Activated CD4-positive, alpha-beta T cell treated with anti-CD3 and anti-CD28 coated beads, Interleukin-2, amount 10 ng/mL, durations not matched to agents 24 days and 14 days (primary cell): ENCODE measurements at regions of chr4 and their contacts with region 1.

Region 1: GRCh38 chr4:185039508-185040273 is 21.4 kb downstream of the HELT start:
- DNase-seq: peak; percentile 84
- H3K4me3 Mint-ChIP-seq: peak overlapping the region; percentile 59
- H3K27ac Mint-ChIP-seq: no peak overlapping the region
- H3K4me1 Mint-ChIP-seq: peaks cover 2% of the 10 kb centered on the region
- H3K27me3 Mint-ChIP-seq: peaks cover 22% of the 10 kb centered on the region

Region 2: DNA sequence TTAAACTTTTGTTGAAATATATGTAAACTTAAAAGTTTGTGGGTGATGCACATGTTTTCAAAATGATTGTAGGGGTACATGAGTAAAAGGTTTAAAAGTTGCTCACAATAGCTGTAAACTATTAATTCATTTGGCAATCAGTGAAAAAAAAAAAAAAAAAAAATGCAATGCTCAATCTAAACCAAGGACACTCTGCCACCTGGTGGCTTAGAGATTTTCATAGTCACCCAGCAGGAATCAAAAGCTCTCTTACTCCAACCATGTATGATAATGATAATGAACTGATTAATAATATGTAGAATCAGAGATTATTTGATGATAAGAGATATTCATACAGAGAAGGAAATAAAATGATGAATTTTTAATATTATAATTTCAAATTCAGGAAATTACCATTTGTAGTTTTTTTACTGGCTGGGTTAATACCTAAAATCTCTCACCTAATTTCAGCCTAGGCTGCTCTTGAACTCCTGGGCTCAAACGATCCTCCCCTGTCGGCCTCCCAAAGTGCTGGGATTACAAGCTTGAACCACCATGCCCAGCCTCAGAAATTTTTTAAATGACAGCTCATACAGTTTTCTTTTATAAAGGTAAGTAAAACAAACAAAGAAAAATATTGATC is 56.5 kb after region 1 on chr4:
- intact Hi-C with region 1: loop called (anchors 5 kb)
- DNase-seq: peak; percentile 71
- H3K4me3 Mint-ChIP-seq: no peak overlapping the region
- H3K27ac Mint-ChIP-seq: no peak overlapping the region
- H3K4me1 Mint-ChIP-seq: no peaks in the 10 kb centered on the region
- H3K27me3 Mint-ChIP-seq: peaks cover 27% of the 10 kb centered on the region

Region 3: DNA sequence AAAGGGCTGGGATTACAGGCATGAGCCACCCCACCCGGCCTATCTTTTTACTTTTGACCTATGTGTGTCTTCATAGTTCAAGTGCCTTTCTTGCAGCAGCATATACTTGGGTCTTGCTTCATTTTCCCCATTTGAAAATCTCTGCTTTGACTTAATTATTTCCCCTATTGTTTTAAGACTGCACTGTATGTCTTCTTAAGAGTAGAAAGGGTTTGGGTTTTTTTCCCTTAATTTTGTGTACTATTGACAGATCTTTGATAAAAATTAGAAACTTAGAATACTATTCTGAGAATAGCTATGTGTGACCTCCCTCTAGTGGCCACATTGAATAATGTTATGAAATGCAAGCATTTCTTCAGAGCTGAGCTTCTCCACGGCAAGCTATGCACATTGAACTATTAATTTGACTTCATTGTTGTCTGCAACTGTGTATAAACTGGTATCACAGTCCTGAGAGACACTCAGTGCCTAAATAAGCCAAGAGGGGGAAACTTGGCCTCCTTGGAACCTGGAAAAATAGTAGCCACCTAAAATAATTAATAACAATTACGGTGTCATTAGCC is 94.7 kb after region 1 on chr4:
- intact Hi-C with region 1: loop called (anchors 1 kb)
- DNase-seq: peak; percentile 68
- H3K4me3 Mint-ChIP-seq: no peak overlapping the region
- H3K27ac Mint-ChIP-seq: no peak overlapping the region
- H3K4me1 Mint-ChIP-seq: no peaks in the 10 kb centered on the region
- H3K27me3 Mint-ChIP-seq: peaks cover 42% of the 10 kb centered on the region

Region 4: GRCh38 chr4:185183619-185184281 is 144.1 kb after region 1 on chr4:
- intact Hi-C with region 1: loop called (anchors 1 kb)
- DNase-seq: peak; percentile 92
- H3K4me3 Mint-ChIP-seq: no peak overlapping the region
- H3K27ac Mint-ChIP-seq: no peak overlapping the region
- H3K4me1 Mint-ChIP-seq: peaks cover 9% of the 10 kb centered on the region
- H3K27me3 Mint-ChIP-seq: no peaks in the 10 kb centered on the region

Region 5: DNA sequence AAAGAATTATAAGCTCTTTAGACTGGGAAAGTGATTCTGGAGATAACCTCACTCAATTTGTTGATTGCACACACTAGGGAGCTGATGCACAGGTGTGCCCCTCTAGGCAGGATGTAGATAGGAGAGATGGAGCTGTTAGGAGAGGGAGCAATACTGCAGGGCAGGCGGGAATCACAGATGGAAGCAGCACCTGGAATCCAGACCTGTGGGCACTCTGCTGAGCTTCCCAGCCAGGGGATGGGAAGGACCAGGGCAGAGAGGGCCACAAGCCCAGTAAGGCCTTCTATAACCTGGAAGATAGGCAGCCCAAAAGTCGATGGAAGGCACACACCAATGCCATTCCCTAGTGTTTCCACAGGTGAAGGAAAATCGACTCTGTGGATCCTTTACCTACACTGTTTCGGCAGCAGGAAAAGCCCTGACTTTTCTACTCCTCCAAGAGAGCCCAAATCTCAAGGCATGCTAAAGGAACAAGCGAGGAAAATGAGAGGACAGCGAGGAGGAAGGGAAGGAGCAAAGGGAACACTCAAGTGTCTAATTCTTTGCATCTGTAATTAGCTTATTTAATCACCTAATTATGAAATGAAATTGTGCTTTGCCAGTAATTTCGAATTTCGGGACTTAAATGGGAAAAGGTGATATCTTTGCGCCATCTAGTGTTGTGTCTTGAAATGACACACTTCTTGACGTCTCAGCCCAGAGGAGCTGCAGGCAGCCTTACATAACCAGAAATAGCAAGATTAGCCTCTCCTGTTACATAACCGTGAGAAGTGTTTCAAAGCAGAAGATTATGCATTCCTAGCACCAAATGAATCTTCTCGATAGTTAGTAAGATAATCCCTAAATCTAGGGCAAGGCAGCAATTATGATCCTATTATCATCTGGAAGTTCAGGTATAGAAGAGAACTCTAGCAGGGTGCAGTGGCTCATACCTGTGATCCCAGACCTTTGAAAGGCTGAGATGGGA is 998.3 kb after region 1 on chr4:
- intact Hi-C with region 1: loop called (anchors 5 kb)
- DNase-seq: peak; percentile 78
- H3K4me3 Mint-ChIP-seq: no peak overlapping the region
- H3K27ac Mint-ChIP-seq: no peak overlapping the region
- H3K4me1 Mint-ChIP-seq: no peaks in the 10 kb centered on the region
- H3K27me3 Mint-ChIP-seq: peaks cover 9% of the 10 kb centered on the region